GM13976 (cell line): ENCODE measurements at regions of chr3 and their contacts with region 1.

Region 1: DNA sequence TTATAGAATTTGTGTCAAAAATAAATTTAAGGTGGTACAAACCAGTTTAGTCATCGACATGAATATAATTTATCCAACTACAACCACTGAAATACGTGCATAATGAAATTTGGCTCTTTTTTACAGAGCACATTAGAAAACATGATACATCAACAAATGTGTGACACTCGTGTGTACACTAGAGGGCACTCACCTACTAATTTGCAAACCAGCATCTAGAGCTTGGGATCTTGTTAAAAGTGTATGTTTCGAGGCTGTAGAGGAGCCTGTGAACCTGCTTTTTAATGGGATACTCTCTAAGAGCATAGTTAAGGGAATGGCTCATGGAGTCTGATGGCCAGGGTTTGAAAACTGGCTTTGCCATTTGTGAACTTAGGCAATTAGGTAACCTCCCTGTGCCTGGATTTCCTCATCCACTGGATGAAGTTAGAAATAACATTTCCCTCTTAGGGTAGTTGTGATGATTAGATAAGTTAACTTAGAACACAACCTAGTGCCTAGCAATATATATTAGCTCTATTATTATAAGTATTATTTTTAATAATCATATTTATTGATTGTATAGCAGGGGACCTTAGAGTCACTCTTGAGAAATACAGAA is 8.8 kb upstream of the CPOX start:
- DNase-seq: peak; percentile 52
- CTCF ChIP-seq: peak; percentile 66

Region 2: GRCh38 chr3:98039322-98040024 is 562.7 kb before region 1 on chr3:
- in situ Hi-C with region 1: loop called (anchors 10 kb)
- DNase-seq: peak; percentile 42
- CTCF ChIP-seq: peak; percentile 84

Region 3: GRCh38 chr3:98994128-98994762 is 392.1 kb after region 1 on chr3:
- in situ Hi-C with region 1: loop called (anchors 25 kb)
- DNase-seq: no peak
- CTCF ChIP-seq: no peak